ENCODE measurements at regions of chr15 and their contacts with region 1.

Region 1: DNA sequence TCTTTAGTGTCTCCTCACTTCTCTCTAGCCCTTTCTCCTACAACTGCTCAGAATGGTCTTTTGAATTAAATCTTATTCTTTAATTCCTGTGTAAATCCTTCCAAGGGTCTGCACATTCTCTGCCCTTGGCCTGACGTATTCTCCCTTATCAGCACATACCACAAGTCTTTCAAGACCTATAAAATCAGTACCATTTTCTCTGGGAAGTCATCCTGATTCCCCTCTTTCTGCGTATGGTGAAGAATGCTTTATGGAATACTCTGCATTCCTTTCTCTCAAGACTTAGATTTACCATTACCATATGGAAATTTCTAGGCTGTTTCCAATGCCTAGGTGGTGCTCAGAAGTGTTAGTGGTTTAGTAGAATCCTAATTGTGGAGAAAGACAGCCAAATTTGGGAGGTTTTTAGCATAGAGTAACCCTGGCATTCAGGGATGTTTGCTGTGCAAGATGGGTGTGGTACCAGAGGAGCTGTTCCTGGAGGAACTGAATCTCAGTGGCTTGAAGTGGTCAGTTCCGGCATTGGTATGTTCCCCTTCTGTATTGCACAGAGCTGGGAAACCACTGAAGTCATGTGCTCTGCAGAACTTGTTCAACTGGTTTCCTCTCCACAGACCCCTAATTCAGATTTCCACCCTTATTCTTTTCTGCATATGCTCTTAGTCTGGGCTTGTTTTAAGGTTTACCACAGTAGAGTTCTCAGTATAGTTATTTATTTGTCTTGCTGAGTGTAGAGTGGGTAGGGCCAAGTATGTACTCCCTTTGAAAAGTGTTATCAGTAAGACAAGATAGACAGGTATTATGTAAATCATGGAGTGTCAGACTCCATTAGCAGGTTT is 24.5 kb downstream of the IQGAP1 start:
- DNase-seq: peak in 3 of 14 experiments; percentile 54 to 59 (median 58)
- ATAC-seq: peak; percentile 39
- H3K4me3 ChIP-seq: no peak overlapping the region
- H3K4me3 Mint-ChIP-seq: peak overlapping the region; percentile 49
- H3K27ac ChIP-seq: no peak overlapping the region
- H3K27ac Mint-ChIP-seq: peak overlapping the region; percentile 40
- H3K4me1 ChIP-seq: peaks cover 30% of the 10 kb centered on the region
- H3K4me1 Mint-ChIP-seq: peaks cover 78% of the 10 kb centered on the region
- H3K27me3 ChIP-seq: no peaks in the 10 kb centered on the region
- H3K27me3 Mint-ChIP-seq: no peaks in the 10 kb centered on the region
- CTCF ChIP-seq: no peak

Region 2: GRCh38 chr15:90376789-90377188 is 35.8 kb before region 1 on chr15:
- CTCF ChIA-PET with region 1: no interaction called
- POLR2A ChIA-PET with region 1: interaction called, 3 read pairs
- intact Hi-C with region 1: loop called in 1 of 2 experiments (anchors 5 kb)
- DNase-seq: peak; percentile 41 to 89 (median 52)
- ATAC-seq: peak; percentile 98
- H3K4me3 ChIP-seq: no peak overlapping the region
- H3K4me3 Mint-ChIP-seq: peak overlapping the region; percentile 70
- H3K27ac ChIP-seq: no peak overlapping the region
- H3K27ac Mint-ChIP-seq: peak overlapping the region; percentile 21
- H3K4me1 ChIP-seq: peaks cover 41% of the 10 kb centered on the region
- H3K4me1 Mint-ChIP-seq: peaks cover 56% of the 10 kb centered on the region
- H3K27me3 ChIP-seq: no peaks in the 10 kb centered on the region
- H3K27me3 Mint-ChIP-seq: no peaks in the 10 kb centered on the region
- CTCF ChIP-seq: no peak

Region 3: GRCh38 chr15:90449206-90449735 is 36.7 kb after region 1 on chr15:
- CTCF ChIA-PET with region 1: no interaction called
- POLR2A ChIA-PET with region 1: no interaction called
- intact Hi-C with region 1: loop called in 1 of 2 experiments (anchors 5 kb)
- DNase-seq: no peak
- ATAC-seq: no peak
- H3K4me3 ChIP-seq: no peak overlapping the region
- H3K4me3 Mint-ChIP-seq: no peak overlapping the region
- H3K27ac ChIP-seq: no peak overlapping the region
- H3K27ac Mint-ChIP-seq: no peak overlapping the region
- H3K4me1 ChIP-seq: no peaks in the 10 kb centered on the region
- H3K4me1 Mint-ChIP-seq: no peaks in the 10 kb centered on the region
- H3K27me3 ChIP-seq: no peaks in the 10 kb centered on the region
- H3K27me3 Mint-ChIP-seq: no peaks in the 10 kb centered on the region
- CTCF ChIP-seq: no peak

Region 4: DNA sequence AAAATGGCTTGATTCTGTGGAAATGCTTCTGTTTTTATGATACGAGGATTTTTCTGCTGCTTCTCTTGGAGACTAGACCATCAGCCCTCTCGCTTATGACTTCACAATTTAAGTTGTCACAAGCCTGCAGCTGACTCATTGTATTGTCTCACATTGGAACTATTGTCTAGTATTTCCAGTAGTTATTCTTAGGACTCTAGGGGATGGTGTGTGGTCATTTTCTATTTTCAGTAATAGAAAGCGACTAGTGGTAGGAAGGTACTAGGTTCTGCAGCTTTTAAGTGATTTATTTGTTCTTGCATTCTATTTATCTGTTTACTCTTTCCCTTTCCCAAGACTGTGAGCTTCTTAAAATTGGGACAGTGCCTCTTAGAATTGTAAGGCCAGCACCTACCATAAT is 50.8 kb after region 1 on chr15:
- CTCF ChIA-PET with region 1: no interaction called
- POLR2A ChIA-PET with region 1: no interaction called
- intact Hi-C with region 1: no loop called
- DNase-seq: no peak
- ATAC-seq: no peak
- H3K4me3 ChIP-seq: no peak overlapping the region
- H3K4me3 Mint-ChIP-seq: no peak overlapping the region
- H3K27ac ChIP-seq: no peak overlapping the region
- H3K27ac Mint-ChIP-seq: peak overlapping the region; percentile 11
- H3K4me1 ChIP-seq: no peaks in the 10 kb centered on the region
- H3K4me1 Mint-ChIP-seq: peaks cover 12% of the 10 kb centered on the region
- H3K27me3 ChIP-seq: no peaks in the 10 kb centered on the region
- H3K27me3 Mint-ChIP-seq: no peaks in the 10 kb centered on the region
- CTCF ChIP-seq: no peak

Region 5: GRCh38 chr15:92184142-92184541 is 1771.6 kb after region 1 on chr15:
- CTCF ChIA-PET with region 1: no interaction called
- POLR2A ChIA-PET with region 1: no interaction called
- intact Hi-C with region 1: no loop called
- DNase-seq: no peak
- ATAC-seq: no peak
- H3K4me3 ChIP-seq: no peak overlapping the region
- H3K4me3 Mint-ChIP-seq: no peak overlapping the region
- H3K27ac ChIP-seq: no peak overlapping the region
- H3K27ac Mint-ChIP-seq: no peak overlapping the region
- H3K4me1 ChIP-seq: no peaks in the 10 kb centered on the region
- H3K4me1 Mint-ChIP-seq: no peaks in the 10 kb centered on the region
- H3K27me3 ChIP-seq: peaks cover 4 to 13% of the 10 kb centered on the region in 2 experiments
- H3K27me3 Mint-ChIP-seq: peaks cover 25% of the 10 kb centered on the region
- CTCF ChIP-seq: no peak